Left lung (tissue), 14 donors: ENCODE measurements at regions of chr1 and their contacts with region 1.

Region 1: GRCh38 chr1:45490626-45491486 is at the start of gene TESK2:
- DNase-seq: peak; percentile 96 to 99 (median 98)
- ATAC-seq: peak; percentile 98
- H3K4me3 ChIP-seq: peak within 1 kb of the TSS; percentile 77 to 90
- H3K27ac ChIP-seq: peak within 1 kb of the TSS; percentile 76 to 81
- H3K4me1 ChIP-seq: peaks cover 5 to 24% of the 10 kb centered on the region in 2 donors
- H3K27me3 ChIP-seq: no peaks in the 10 kb centered on the region
- CTCF ChIP-seq: peak; percentile 15 to 50
- polyA plus RNA-seq, gene TESK2: 8.5 to 12.5 (median 10.2) TPM

Region 2: DNA sequence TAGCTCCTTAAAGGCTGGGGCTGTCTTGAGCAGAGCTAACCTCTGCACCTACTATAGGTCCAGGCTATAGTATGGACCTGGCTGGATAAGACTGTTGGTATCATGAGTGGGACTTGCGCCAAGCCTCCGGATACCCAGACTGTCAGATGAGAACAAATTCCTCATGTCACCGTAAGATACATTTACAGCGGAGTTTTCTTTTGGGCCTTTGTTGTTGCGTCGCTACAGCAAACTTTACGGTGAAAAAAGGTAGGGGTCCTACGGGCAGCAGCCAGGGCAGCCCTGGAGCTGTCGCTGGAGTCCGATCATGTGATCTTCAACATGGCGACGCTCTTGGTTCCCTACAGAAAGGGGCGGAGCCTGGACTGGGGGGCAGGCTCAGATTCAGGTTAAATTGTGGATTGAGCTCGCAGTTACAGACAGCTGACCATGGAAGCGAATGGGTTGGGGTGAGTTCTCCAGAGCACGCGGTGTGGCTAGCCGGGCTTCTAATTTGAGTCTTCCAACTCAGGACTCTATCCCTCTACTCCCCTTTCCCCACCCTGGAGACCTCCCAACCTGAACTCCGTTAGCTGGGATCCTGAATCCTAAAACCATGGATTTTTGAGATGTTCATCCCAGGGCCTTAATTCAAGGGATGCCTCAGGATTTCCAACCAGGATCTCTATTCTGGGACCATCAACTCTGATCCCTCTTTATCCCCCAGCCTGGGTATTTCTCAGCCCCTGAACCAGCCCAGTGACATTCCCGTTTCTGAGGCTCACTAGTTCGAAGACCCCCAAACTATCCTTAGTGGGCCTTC is 478.8 kb before region 1 on chr1 and contains the start of gene UROD:
- intact Hi-C with region 1: loop called in 1 of 2 experiments (anchors 10 kb)
- DNase-seq: peak; percentile 92 to 97 (median 93)
- ATAC-seq: peak; percentile 92
- H3K4me3 ChIP-seq: peak within 1 kb of the TSS; percentile 79 to 86
- H3K27ac ChIP-seq: peak within 1 kb of the TSS; percentile 87 to 88
- H3K4me1 ChIP-seq: peaks cover 18 to 52% of the 10 kb centered on the region in 2 donors
- H3K27me3 ChIP-seq: no peaks in the 10 kb centered on the region
- CTCF ChIP-seq: no peak
- polyA plus RNA-seq, gene UROD: 86.7 to 102 (median 91.0) TPM

Region 3: DNA sequence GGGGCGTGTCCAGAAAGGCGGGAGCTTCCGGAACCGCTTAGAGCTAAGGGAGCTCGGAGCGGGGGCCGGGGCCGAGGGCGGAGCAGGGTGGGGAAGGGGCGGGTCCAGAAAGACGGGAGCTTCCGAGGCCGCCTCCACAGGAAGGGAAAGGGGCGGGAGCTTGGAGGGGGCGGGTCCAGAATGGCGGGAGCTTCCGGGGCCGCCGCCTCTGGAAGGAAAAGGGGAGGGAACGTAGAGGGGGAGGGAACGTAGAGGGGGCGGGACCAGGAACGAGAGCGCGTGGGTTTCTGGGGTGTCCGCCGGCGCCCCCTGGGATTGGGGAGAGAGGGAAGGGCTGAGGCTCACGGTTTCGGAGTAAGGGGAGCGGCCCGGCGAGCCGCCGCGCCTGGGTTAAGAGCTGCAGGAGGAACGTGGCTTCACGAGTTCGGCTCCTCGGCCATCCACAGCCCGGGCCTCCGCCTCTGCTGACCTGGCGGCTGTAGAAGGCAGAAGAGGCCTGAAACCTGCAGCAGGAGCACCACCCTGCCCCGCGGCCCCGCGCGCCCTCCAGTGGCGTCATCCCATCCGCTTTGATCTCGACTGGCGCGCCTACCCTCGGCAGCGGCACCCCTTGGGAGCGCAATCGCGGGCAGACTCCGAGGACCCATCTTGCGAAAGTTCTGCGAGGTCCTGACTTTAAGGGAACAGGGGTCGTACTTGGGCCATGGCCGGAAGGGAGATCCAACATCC is 187.1 kb before region 1 on chr1:
- intact Hi-C with region 1: loop called in 1 of 2 experiments (anchors 5 kb)
- DNase-seq: peak; percentile 96 to 100 (median 99)
- ATAC-seq: peak; percentile 96
- H3K4me3 ChIP-seq: peak overlapping the region; percentile 60 to 77
- H3K27ac ChIP-seq: peak overlapping the region; percentile 89 to 94
- H3K4me1 ChIP-seq: peaks cover 15 to 18% of the 10 kb centered on the region in 2 donors
- H3K27me3 ChIP-seq: no peaks in the 10 kb centered on the region
- CTCF ChIP-seq: peak; percentile 53 to 55

Region 4: GRCh38 chr1:45359882-45360513 is 130.9 kb before region 1 on chr1:
- intact Hi-C with region 1: loop called in 1 of 2 experiments (anchors 5 kb)
- DNase-seq: peak in 3 of 4 donors; percentile 58 to 82 (median 71)
- ATAC-seq: peak; percentile 89
- H3K4me3 ChIP-seq: no peak overlapping the region
- H3K27ac ChIP-seq: peak overlapping the region; percentile 60 to 66
- H3K4me1 ChIP-seq: peaks cover 10 to 20% of the 10 kb centered on the region in 2 donors
- H3K27me3 ChIP-seq: no peaks in the 10 kb centered on the region
- CTCF ChIP-seq: peak; percentile 48 to 52